ENCODE measurements at regions of chr14 and their contacts with region 1.

Region 1: DNA sequence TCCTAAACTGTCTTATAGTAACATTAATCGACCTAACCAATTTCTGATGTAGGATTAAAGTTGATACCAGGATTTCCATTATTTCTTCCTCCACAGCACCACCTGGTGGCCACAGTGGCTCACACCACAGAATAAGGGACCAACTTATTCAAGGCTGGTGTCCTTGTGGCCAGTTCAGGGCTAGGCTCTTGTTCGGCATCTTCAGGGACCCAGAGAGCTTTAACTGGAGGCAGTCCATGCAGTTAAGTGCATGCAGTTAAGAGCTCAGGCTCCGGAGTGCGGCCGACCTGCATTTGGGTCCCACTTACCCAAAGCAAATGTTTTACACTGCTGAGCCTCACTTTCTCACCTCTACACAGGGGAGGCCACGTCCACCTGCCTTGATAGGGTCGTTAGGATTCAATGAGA is 42.0 kb upstream of the GPR68 start:
- DNase-seq: peak; percentile 80
- H3K4me3 ChIP-seq: no peak overlapping the region
- H3K27ac ChIP-seq: peak overlapping the region; percentile 97
- H3K4me1 ChIP-seq: peaks cover 54% of the 10 kb centered on the region
- CTCF ChIP-seq: peak; percentile 98

Region 2: GRCh38 chr14:90903101-90903500 is 383.4 kb before region 1 on chr14:
- CTCF ChIA-PET with region 1: interaction called, 3 read pairs
- POLR2A ChIA-PET with region 1: no interaction called
- intact Hi-C with region 1: loop called (anchors 2 kb)
- DNase-seq: peak; percentile 70
- H3K4me3 ChIP-seq: no peak overlapping the region
- H3K27ac ChIP-seq: no peak overlapping the region
- H3K4me1 ChIP-seq: peaks cover 8% of the 10 kb centered on the region
- CTCF ChIP-seq: peak; percentile 95

Region 3: DNA sequence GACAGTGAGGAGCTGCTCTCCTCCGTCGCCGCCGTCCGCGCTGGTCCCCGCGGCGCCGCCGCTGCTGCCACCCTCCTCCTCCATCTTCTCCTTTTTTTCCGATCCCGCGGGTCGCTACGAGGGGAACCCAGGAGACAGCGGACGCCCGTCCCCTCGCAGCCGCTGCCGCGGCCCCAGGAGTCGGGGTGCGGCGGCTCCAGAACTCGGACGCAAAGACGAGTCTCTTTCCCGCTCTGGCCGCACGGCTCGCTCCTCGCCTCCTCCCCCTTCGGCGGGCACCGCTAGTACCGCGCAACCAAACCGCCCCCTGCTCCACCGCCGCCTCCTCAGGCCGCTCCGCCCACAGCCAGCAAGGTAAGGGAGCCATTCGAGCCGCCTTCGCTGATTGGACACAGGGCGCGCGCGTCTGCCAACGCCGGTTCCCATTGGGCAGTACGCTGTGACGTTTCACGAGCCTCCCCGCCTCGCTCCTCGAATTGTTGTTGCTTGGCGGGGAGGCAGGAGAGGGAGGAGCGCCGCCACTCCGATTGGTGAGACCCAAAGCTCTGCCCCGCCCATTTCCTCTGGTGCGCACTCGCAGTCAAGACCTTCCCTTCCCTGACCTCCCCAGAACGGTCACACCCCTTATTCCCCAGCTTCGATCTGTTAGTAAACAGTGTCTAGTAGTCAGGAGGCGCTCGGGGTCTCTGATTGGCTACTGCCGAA is 226.0 kb before region 1 on chr14 and contains the start of gene RPS6KA5:
- CTCF ChIA-PET with region 1: no interaction called
- POLR2A ChIA-PET with region 1: no interaction called
- intact Hi-C with region 1: loop called (anchors 10 kb)
- DNase-seq: peak; percentile 100
- H3K4me3 ChIP-seq: peak within 1 kb of the TSS; percentile 83
- H3K27ac ChIP-seq: peak within 1 kb of the TSS; percentile 78
- H3K4me1 ChIP-seq: peaks cover 32% of the 10 kb centered on the region
- CTCF ChIP-seq: no peak
- total RNA-seq, gene RPS6KA5: 9.0 and 9.6 TPM in 2 replicates

Region 4: GRCh38 chr14:91177073-91178034 is 109.2 kb before region 1 on chr14:
- CTCF ChIA-PET with region 1: interaction called, 9 read pairs
- POLR2A ChIA-PET with region 1: interaction called, 6 read pairs
- intact Hi-C with region 1: loop called (anchors 1 kb)
- DNase-seq: peak; percentile 82
- H3K4me3 ChIP-seq: no peak overlapping the region
- H3K27ac ChIP-seq: peak overlapping the region; percentile 42
- H3K4me1 ChIP-seq: peaks cover 10% of the 10 kb centered on the region
- CTCF ChIP-seq: peak; percentile 98

Region 5: DNA sequence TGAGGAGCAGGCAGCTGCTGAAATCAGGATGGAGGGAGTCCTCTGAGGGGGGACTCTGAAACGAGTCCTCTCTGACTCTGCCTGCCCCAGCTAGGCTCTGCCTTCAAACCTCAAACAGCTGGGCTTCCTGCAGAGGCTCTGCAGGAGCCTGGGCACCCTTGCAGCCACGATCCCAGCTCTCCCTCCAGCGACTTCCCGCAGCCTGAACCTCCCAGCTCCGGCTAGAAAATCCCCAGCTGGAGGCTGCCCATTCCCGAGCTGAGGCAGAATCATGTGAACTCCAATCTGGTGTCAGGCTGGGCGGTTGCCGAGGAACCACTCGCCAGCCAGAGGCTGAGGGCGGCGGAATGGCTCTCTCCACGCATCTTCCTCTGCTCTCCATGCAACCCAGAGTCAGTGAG is 42.0 kb before region 1 on chr14 and contains the start of gene GPR68:
- CTCF ChIA-PET with region 1: interaction called, 3 read pairs
- POLR2A ChIA-PET with region 1: interaction called, 7 read pairs
- intact Hi-C with region 1: loop called (anchors 5 kb)
- DNase-seq: peak; percentile 50
- H3K4me3 ChIP-seq: peak within 1 kb of the TSS; percentile 32
- H3K27ac ChIP-seq: peak within 1 kb of the TSS; percentile 76
- H3K4me1 ChIP-seq: peaks cover 68% of the 10 kb centered on the region
- CTCF ChIP-seq: no peak
- total RNA-seq, gene GPR68: 0.13 and 0.85 TPM in 2 replicates

Measured in OCI-LY7 (cell line).